Esophagus muscularis mucosa (tissue), 4 donors: ENCODE measurements at regions of chr7 and their contacts with region 1.

Region 1: DNA sequence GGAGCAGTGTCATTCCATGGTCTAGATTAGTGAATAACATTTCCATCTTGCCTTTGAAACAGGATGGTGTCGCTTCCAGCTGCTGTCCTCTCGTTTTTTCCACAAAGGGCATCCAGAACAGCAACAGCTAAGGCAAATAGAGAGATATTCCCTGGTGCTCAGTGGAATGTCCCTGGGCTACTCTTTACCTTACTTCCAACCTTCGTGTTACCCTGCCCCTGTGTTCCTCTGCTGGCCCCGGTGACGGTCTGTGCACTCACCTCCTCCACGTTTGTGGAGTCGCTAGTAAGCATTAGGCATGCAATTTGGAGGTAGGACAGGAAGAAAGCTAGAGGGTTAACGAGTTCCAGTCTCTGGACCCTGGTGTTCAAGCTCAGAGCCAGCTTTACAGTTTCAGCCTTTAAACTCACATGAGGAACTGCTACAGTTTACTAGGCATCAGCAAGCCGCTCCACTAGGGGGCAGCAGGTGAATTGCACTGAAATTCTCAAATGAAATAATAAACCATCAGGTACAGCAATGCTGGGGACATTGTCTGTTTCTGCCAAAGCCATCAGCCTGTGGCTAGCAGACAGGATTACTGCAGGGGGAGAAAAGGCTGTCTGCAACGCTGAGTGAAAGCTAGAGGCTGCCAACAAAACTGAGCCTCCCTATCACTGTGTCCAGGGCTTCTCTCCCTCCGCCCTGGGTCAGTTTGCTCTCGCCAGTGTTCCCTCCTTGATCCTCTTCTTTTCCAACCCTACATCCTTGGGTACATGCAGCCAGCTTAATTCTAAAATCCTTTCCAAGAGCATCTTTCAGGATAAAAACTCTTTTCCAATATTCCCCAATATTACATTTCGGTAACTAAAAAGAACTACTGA is 9.0 kb downstream of the MRPL32 start:
- DNase-seq: peak; percentile 95
- H3K4me3 ChIP-seq: no peak overlapping the region
- H3K27ac ChIP-seq: no peak overlapping the region
- H3K4me1 ChIP-seq: peaks cover 0 to 5% (median 0%) of the 10 kb centered on the region in 4 donors
- H3K27me3 ChIP-seq: no peaks in the 10 kb centered on the region
- CTCF ChIP-seq: peak; percentile 75 to 91 (median 88)
- EP300 ChIP-seq: no peak
- POLR2A ChIP-seq: no peak

Region 2: DNA sequence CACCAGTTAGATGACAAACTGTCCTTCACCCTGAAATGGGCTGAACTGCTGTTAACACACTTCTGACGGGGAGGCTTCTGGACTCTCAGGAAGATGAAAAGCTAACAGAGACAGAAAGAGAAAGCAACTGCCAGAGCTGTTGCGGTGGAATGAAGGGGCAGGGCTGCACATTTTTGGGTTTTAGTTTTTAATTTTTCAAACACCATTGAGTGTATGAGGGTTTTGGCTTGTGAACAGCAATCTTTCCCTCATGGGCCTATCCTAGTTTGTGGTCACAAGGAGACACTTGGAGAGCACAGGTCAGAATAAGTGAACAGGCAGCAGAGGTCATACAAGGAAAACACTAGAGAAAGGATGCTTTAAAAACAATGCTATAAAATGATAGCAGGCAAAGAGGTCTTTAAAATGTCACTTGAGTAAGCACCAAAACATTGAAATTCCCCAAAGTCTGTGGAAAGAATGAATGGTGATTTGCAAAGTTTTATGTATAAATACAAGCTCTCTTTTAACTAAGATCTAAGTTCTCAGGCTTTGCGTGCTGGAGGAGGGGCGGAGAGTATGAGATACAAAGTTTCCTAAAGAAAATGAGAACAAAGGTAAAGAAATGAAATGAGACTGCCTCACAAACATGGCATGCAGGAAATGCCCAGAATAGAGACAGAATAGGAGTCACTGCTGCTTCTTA is 602.8 kb before region 1 on chr7:
- intact Hi-C with region 1: no loop called
- DNase-seq: no peak
- H3K4me3 ChIP-seq: no peak overlapping the region
- H3K27ac ChIP-seq: no peak overlapping the region
- H3K4me1 ChIP-seq: peaks cover 0 to 6% (median 3%) of the 10 kb centered on the region in 4 donors
- H3K27me3 ChIP-seq: no peaks in the 10 kb centered on the region
- CTCF ChIP-seq: no peak
- EP300 ChIP-seq: no peak
- POLR2A ChIP-seq: no peak

Region 3: DNA sequence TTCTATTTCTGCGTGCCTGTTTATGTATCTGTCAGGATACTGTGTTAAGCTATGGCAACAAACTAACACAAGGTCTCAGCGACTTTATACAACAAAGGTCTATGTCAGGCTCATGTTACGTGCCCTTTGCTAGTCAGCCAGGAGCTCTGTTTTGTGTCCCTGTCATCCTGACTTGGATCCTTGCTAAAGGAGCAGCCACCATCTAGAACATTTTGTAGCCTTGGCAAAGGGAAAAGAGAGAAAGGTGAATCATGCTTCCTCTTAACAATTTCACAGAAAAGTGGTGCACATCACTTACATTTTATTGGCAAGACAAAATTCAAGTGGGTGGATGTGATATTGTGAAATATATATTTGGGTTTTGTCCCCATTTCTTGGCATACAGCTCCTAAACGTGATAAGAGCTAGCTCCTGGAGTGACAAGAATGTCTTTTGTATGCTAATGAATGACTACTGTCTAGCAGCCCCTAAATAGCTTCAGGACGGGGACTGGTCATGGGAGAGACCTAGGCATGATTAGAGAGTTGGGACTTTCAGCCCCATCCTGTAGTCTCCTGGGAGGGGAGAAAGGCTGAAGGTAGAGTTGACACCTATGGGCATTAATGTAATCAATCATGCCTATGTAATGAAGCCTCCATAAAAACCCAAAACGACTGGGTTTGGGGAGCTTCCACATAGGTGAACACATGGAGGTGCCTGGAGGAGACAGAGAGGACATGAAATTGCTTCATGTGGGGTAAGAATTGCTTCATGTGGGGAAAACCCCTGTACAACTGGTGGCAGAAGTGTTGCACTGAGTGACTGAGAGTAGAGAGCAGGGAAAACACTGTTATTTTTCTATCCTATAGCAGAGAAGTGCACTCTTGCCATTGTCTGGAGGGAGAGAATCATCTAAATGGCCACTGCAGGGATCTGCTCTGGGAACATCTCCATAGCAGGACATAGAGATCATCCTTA is 23.9 kb after region 1 on chr7:
- intact Hi-C with region 1: no loop called
- DNase-seq: no peak
- H3K4me3 ChIP-seq: no peak overlapping the region
- H3K27ac ChIP-seq: peak overlapping the region in 2 of 4 donors; percentile 6 to 27
- H3K4me1 ChIP-seq: peaks cover 0 to 14% (median 0%) of the 10 kb centered on the region in 4 donors
- H3K27me3 ChIP-seq: no peaks in the 10 kb centered on the region
- CTCF ChIP-seq: no peak
- EP300 ChIP-seq: no peak
- POLR2A ChIP-seq: no peak

Region 4: GRCh38 chr7:43108255-43109011 is 167.2 kb after region 1 on chr7:
- intact Hi-C with region 1: loop called (anchors 5 kb)
- DNase-seq: no peak
- H3K4me3 ChIP-seq: no peak overlapping the region
- H3K27ac ChIP-seq: no peak overlapping the region
- H3K4me1 ChIP-seq: peaks cover 13 to 17% (median 15%) of the 10 kb centered on the region in 4 donors
- H3K27me3 ChIP-seq: peaks cover 7 to 57% (median 17%) of the 10 kb centered on the region in 4 donors
- CTCF ChIP-seq: peak; percentile 43 to 84 (median 50)
- EP300 ChIP-seq: no peak
- POLR2A ChIP-seq: no peak

Region 5: DNA sequence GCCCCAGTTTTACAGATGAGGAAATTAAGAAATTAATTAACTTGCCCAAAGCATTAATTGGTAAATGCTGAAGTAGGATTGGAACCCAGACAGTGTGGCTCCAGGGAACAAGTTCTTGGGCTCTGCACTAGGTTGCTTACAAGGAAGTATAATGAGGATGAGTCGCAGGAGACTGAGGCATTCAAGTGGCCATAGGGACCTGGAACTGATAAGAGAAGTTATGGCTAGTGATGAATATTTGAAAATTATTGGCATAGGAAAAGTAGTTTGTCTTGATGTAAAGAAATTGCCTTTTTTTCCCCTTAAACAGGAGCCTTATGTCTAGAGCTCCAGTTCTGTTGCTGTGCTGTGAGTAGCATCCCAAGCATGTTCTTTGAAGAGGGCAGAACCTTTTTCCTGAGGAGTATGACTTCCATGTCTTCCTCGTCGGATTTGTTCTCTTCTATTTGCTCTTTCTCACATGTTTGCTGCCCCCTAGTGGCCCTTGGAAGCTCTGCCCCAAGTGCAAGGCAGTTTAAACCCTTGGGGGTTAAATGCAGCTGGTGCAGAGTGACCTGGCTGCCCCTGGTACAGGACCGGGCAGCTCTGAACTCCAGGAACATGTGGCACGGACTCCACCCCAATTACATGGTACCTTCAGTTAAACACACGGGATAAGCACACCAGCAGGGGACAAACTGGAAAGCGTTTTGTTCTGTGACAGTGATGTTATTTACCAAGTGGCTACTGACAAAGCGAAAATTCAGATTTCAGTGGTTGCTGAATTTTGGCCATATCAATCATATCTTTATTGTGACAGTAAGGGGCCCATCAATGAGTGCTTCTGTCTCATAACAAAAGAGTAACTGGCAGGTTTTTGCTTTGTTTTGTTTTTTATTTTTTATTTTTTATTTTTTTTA is 320.0 kb after region 1 on chr7:
- intact Hi-C with region 1: loop called (anchors 2 kb)
- DNase-seq: no peak
- H3K4me3 ChIP-seq: no peak overlapping the region
- H3K27ac ChIP-seq: no peak overlapping the region
- H3K4me1 ChIP-seq: no peaks in the 10 kb centered on the region
- H3K27me3 ChIP-seq: no peaks in the 10 kb centered on the region
- CTCF ChIP-seq: peak; percentile 83 to 94 (median 90)
- EP300 ChIP-seq: no peak
- POLR2A ChIP-seq: no peak